ENCODE measurements at regions of chr10 and their contacts with region 1.

Region 1: DNA sequence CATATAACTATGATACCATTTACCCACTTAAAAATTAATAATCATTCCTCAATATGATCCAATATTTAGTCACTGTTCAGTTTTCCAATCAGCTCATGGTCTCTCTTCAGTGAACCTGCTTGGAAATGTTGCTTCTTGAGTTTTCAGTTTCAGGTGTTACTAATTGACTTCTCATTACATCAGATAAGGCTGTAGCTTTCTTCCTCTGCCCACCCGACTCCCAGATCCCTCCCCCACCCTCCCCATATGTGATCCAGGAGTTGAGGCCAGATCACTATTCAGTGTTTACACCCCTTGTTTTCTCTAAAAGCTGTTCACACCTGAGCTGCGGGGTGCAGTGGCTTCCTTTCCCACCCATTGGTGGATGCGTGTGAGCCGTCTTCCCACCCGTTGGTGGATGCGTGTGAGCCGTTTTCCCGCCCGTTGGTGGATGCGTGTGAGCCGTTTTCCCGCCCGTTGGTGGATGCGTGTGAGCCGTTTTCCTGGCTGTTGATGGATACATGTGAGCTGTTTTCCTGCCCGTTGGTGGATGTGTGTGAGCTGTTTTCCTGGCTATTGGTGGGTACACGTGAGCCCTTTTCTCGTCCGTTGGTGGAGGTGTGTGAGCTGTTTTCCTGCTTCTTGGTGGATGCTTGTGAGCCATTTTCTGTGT is 3.2 kb upstream of the MTG1 start:
- DNase-seq: no peak
- H3K4me3 ChIP-seq: no peak overlapping the region
- H3K27ac ChIP-seq: no peak overlapping the region
- H3K4me1 ChIP-seq: peaks cover 3 to 8% of the 10 kb centered on the region in 2 donors
- H3K27me3 ChIP-seq: no peaks in the 10 kb centered on the region
- CTCF ChIP-seq: no peak
- POLR2A ChIP-seq: no peak

Region 2: GRCh38 chr10:133373104-133373624 is 17.6 kb before region 1 on chr10 and contains the start of gene ECHS1:
- intact Hi-C with region 1: loop called (anchors 1 kb)
- DNase-seq: peak; percentile 91 to 93
- H3K4me3 ChIP-seq: peak within 1 kb of the TSS; percentile 82 to 93 (median 82)
- H3K27ac ChIP-seq: peak within 1 kb of the TSS; percentile 85 to 96
- H3K4me1 ChIP-seq: no peaks in the 10 kb centered on the region
- H3K27me3 ChIP-seq: no peaks in the 10 kb centered on the region
- CTCF ChIP-seq: no peak
- POLR2A ChIP-seq: peak; percentile 35
- total RNA-seq, gene ECHS1: 71.8 to 165 (median 84.2) TPM